Natural killer cell (primary cell): ENCODE measurements at regions of chr22 and their contacts with region 1.

Region 1: GRCh38 chr22:32411829-32412592 is at the start of gene RTCB:
- DNase-seq: peak; percentile 89 to 96
- ATAC-seq: peak; percentile 85 to 95 (median 85)
- H3K4me3 ChIP-seq: peak within 1 kb of the TSS; percentile 86
- H3K4me3 Mint-ChIP-seq: peak within 1 kb of the TSS; percentile 96
- H3K27ac ChIP-seq: peak within 1 kb of the TSS; percentile 23
- H3K27ac Mint-ChIP-seq: peak within 1 kb of the TSS; percentile 89 to 90
- H3K4me1 ChIP-seq: peaks cover 17% of the 10 kb centered on the region
- H3K4me1 Mint-ChIP-seq: peaks cover 43 to 49% of the 10 kb centered on the region in 2 donors
- H3K27me3 ChIP-seq: no peaks in the 10 kb centered on the region
- H3K27me3 Mint-ChIP-seq: peaks cover 10 to 22% of the 10 kb centered on the region in 2 donors
- CTCF ChIP-seq: no peak
- total RNA-seq, gene RTCB: 44.3 to 53.2 (median 46.6) TPM

Region 2: GRCh38 chr22:32144496-32145274 is 267.3 kb before region 1 on chr22:
- intact Hi-C with region 1: loop called (anchors 5 kb)
- DNase-seq: no peak
- ATAC-seq: peak in 2 of 3 donors; percentile 50 to 63
- H3K4me3 ChIP-seq: no peak overlapping the region
- H3K4me3 Mint-ChIP-seq: no peak overlapping the region
- H3K27ac ChIP-seq: no peak overlapping the region
- H3K27ac Mint-ChIP-seq: no peak overlapping the region
- H3K4me1 ChIP-seq: peaks cover 7% of the 10 kb centered on the region
- H3K4me1 Mint-ChIP-seq: no peaks in the 10 kb centered on the region
- H3K27me3 ChIP-seq: no peaks in the 10 kb centered on the region
- H3K27me3 Mint-ChIP-seq: peaks cover 7 to 13% of the 10 kb centered on the region in 2 donors
- CTCF ChIP-seq: no peak

Region 3: GRCh38 chr22:32951076-32951806 is 539.2 kb after region 1 on chr22:
- intact Hi-C with region 1: no loop called
- DNase-seq: no peak
- ATAC-seq: no peak
- H3K4me3 ChIP-seq: no peak overlapping the region
- H3K4me3 Mint-ChIP-seq: no peak overlapping the region
- H3K27ac ChIP-seq: no peak overlapping the region
- H3K27ac Mint-ChIP-seq: no peak overlapping the region
- H3K4me1 ChIP-seq: no peaks in the 10 kb centered on the region
- H3K4me1 Mint-ChIP-seq: no peaks in the 10 kb centered on the region
- H3K27me3 ChIP-seq: no peaks in the 10 kb centered on the region
- H3K27me3 Mint-ChIP-seq: peaks cover 4 to 11% of the 10 kb centered on the region in 2 donors
- CTCF ChIP-seq: no peak